ENCODE measurements at regions of chr1 and their contacts with region 1.

Region 1: GRCh38 chr1:203463469-203464062 is 12.0 kb upstream of the PRELP start:
- DNase-seq: no peak
- CTCF ChIP-seq: no peak

Region 2: DNA sequence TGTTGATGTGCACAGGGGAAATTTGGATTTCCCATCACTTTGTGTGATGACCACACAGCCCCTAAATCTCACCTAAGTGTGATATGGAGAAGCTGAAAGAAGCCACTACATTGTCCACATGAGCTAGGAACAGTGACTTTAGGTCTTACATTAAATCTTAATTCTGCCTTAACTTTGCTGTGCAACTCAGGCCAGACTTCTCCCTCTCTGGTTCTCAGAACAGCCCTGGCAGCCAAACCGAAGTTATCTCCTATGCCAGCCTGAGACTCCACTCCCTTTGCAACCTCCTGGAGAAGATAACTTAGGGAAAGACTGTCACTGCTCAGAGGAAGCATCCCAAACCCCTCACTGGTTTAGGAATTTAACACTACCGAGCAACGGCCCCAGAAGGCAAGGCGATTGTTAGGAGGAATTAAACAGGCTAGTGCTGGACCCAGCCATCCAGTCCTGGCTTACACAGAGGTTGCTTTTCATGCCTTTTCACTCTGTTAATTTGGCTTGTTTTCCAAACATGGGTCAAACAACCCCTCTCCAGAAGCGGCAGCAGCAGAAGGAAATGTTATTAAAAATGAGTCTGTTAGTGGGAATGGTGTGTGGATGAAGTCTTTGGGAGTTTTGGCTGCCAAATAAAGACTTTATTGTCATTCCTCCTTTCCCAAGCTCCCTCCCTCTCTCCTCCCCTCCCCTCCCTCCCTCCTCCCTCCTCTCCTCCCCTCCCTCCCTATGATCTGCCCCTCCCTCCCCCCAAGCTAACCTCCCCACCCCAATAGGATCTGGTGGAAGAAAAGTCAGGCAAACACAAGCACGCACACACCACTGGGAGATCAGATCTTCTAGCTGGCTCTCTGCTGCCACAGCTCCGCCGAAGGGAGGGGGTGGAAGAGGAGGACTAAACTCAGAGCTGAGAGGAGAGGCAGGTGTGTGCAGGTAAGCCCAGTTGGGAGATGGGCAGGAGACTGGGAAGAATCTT is 11.7 kb after region 1 on chr1 and contains the start of gene PRELP:
- CTCF ChIA-PET with region 1: interaction called, 28 read pairs
- POLR2A ChIA-PET with region 1: no interaction called
- DNase-seq: no peak
- CTCF ChIP-seq: no peak

Region 3: DNA sequence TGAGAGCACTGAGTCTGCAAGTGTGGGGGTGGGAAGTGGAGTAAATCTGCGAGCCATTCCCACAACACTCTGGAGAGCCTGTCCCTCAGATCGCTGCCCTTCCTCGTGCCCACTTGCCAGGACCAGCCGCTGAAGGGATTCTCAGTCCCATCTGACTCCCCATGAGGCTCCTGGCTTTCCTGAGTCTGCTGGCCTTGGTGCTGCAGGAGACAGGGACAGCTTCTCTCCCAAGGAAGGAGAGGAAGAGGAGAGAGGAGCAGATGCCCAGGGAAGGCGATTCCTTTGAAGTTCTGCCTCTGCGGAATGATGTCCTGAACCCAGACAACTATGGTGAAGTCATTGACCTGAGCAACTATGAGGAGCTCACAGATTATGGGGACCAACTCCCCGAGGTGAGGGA is 32.3 kb after region 1 on chr1:
- CTCF ChIA-PET with region 1: no interaction called
- POLR2A ChIA-PET with region 1: no interaction called
- DNase-seq: no peak
- CTCF ChIP-seq: no peak